ENCODE measurements at regions of chr18 and their contacts with region 1.

Region 1: GRCh38 chr18:35497370-35498197 is at the start of gene INO80C:
- DNase-seq: peak; percentile 93
- ATAC-seq: peak; percentile 95
- H3K4me3 Mint-ChIP-seq: peak within 1 kb of the TSS; percentile 89
- H3K27ac Mint-ChIP-seq: peak within 1 kb of the TSS; percentile 98
- H3K4me1 Mint-ChIP-seq: peaks cover 34% of the 10 kb centered on the region
- H3K27me3 Mint-ChIP-seq: no peaks in the 10 kb centered on the region
- CTCF ChIP-seq: no peak
- total RNA-seq, gene INO80C: 23.3 to 25.9 TPM

Region 2: DNA sequence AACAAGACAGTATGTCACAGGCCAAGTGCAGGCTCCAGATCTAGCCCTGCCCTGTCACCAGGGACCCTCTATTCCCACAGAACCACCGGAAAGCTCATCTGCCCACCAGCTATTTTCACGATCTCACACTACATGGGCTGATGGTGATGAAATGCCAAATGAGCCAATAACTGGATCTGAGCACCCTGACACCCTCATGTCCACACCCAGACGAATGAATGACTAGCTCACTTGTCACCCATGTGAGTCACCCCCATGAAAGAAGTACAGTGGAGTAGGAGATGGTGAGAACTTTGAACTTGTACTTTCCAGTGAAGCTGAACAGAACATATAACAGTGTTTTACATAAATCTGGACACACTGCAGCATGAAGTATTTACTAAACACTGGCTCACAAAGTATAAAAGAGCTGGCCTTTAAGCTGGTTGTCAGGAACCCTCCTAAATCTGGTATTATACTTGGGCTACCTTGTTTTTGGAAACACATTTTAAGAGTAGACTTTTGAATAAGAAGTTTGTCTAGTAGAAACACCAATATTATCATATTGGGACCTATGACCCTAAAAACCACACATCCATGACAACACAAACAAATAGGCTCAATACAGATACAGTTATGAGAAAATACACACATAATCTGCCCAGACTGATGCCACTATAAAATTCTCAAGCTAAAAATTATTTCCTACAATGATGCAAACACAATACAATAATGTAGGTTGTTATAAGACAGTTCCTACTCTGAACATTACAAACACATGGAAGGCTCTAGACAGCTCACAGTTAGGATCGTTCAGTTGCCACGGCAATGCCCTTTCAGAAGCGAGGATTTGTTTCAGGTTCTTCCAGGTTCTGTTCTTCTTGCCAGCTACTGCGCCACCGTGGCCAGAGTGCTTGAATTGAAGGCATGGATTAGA is 18.8 kb before region 1 on chr18:
- CTCF ChIA-PET with region 1: interaction called, 5 read pairs
- POLR2A ChIA-PET with region 1: interaction called, 14 read pairs
- intact Hi-C with region 1: no loop called
- DNase-seq: peak; percentile 69
- ATAC-seq: peak; percentile 100
- H3K4me3 Mint-ChIP-seq: peak overlapping the region; percentile 2
- H3K27ac Mint-ChIP-seq: peak overlapping the region; percentile 15
- H3K4me1 Mint-ChIP-seq: peaks cover 30% of the 10 kb centered on the region
- H3K27me3 Mint-ChIP-seq: no peaks in the 10 kb centered on the region
- CTCF ChIP-seq: no peak

Region 3: GRCh38 chr18:35484034-35484433 is 13.6 kb before region 1 on chr18:
- CTCF ChIA-PET with region 1: interaction called, 5 read pairs
- POLR2A ChIA-PET with region 1: interaction called, 14 read pairs
- intact Hi-C with region 1: no loop called
- DNase-seq: no peak
- ATAC-seq: peak; percentile 82
- H3K4me3 Mint-ChIP-seq: no peak overlapping the region
- H3K27ac Mint-ChIP-seq: no peak overlapping the region
- H3K4me1 Mint-ChIP-seq: peaks cover 42% of the 10 kb centered on the region
- H3K27me3 Mint-ChIP-seq: no peaks in the 10 kb centered on the region
- CTCF ChIP-seq: no peak

Region 4: GRCh38 chr18:35577045-35577848 is 79.7 kb after region 1 on chr18:
- CTCF ChIA-PET with region 1: no interaction called
- POLR2A ChIA-PET with region 1: interaction called, 4 read pairs
- intact Hi-C with region 1: loop called (anchors 5 kb)
- DNase-seq: peak; percentile 70
- ATAC-seq: peak; percentile 78
- H3K4me3 Mint-ChIP-seq: no peak overlapping the region
- H3K27ac Mint-ChIP-seq: no peak overlapping the region
- H3K4me1 Mint-ChIP-seq: peaks cover 38% of the 10 kb centered on the region
- H3K27me3 Mint-ChIP-seq: peaks cover 25% of the 10 kb centered on the region
- CTCF ChIP-seq: no peak

Measured in activated CD8-positive, alpha-beta T cell treated with anti-CD3 and anti-CD28 coated beads for 36 hours (primary cell).